ENCODE measurements at regions of chr3 and their contacts with region 1.

Region 1: DNA sequence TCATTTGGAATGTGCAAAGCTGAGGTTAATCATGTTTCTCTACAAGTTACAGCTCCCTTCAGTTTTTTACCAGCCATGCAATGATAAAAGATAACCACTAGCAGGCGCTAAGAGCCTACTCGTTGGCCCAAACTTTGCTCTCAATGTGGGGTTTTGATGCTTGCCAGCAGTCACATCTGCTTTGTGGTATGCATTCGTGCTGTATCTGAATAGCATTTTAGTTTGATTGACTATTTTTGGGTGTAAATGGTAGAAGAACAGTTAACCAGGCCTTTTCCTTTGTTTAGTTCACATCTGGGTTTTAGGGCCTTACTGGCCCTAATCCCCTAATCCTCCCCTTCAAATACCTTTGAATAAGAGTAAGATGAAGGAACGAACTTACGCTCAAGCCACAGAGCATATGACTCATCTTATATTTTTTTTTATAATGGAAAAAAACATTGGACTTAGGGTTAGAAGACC is 4.4 kb upstream of the CLDN11 start:
- DNase-seq: peak in 1 of 6 donors; percentile 41
- ATAC-seq: peak; percentile 50 to 88 (median 82)
- H3K4me3 ChIP-seq: no peak overlapping the region
- H3K27ac ChIP-seq: no peak overlapping the region
- H3K4me1 ChIP-seq: peaks cover 0 to 4% (median 0%) of the 10 kb centered on the region in 3 donors
- H3K27me3 ChIP-seq: peaks cover 0 to 10% (median 2%) of the 10 kb centered on the region in 4 donors
- CTCF ChIP-seq: peak; percentile 57 to 90 (median 84)

Region 2: DNA sequence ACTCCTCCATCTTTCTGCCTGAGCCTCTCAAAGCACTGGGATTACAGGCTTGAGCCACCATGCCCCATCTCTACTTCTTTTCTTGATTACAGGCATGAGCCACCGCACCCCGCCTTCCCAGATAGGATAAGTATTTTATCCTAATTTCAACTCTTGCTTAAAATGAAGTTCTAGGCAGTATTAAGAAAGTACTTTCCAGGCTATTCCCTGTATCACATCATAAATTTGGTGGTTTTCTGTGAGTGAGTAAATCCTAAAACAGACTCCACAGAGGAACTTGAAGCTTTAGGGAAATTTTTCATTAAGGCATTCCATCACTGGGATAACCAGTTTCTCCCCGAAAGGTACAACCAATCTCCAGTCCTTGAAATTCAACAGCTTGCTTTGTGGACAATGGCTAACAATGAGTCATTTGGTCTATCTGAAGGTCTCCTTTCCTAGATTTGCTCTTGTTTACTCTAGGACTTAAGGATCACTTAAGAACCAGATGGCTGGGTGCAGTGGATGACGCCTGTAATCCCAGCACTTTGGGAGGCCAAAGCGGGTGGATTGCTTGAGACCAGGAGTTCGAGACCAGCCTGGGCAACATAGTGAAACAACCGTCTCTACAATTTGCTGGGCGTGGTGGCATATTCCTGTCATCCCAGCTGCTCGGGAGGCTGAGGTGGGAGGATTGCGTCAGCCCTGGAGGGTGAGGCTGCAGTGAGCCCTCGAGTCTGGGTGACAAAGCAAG is 106.4 kb before region 1 on chr3:
- intact Hi-C with region 1: loop called in 1 of 3 experiments (anchors 5 kb)
- DNase-seq: peak in 4 of 6 donors; percentile 20 to 66 (median 54)
- ATAC-seq: peak; percentile 79 to 90 (median 86)
- H3K4me3 ChIP-seq: no peak overlapping the region
- H3K27ac ChIP-seq: peak overlapping the region; percentile 7 to 50 (median 35)
- H3K4me1 ChIP-seq: peaks cover 6 to 13% (median 6%) of the 10 kb centered on the region in 3 donors
- H3K27me3 ChIP-seq: no peaks in the 10 kb centered on the region
- CTCF ChIP-seq: no peak

Region 3: DNA sequence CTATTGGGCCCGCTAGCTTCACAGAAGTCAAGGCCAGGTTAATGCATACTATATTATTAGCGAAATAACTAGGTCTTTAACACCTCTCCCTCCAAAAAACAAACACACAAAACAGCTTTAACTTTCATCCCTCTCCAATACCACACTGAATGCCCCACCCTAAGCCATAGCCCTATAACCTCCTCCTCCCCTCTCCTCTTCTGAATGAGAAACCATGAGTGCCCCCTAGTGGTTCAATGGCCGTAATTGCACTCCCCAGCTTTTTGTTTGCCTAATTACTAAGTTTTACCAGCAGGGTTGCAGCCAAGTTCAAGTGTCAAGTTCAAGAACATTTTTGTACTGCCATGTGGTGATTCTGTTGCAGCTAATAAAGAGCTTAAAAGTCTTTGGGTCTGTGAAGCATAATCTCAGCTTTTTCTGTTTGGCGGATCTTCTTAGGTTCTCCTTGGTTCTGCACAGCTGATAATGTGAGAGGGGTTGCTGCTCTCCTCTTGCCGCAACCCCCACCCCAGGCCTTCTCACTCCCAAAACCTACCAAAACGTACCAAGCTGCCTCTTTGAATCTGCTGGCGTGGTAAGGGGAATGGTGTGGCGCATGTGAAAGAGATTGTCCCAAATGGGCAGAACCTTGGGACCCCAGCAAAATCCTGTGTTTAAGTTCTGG is 397.8 kb after region 1 on chr3:
- intact Hi-C with region 1: loop called in 2 of 3 experiments (anchors 5 to 10 kb)
- DNase-seq: peak in 5 of 6 donors; percentile 52 to 81 (median 60)
- ATAC-seq: peak; percentile 58 to 88 (median 86)
- H3K4me3 ChIP-seq: no peak overlapping the region
- H3K27ac ChIP-seq: no peak overlapping the region
- H3K4me1 ChIP-seq: peaks cover 0 to 10% (median 0%) of the 10 kb centered on the region in 3 donors
- H3K27me3 ChIP-seq: no peaks in the 10 kb centered on the region
- CTCF ChIP-seq: peak; percentile 75 to 93 (median 88)

Measured in pancreas (tissue), 10 donors.